Gastrocnemius medialis (tissue), 4 donors: ENCODE measurements at regions of chr11 and their contacts with region 1.

Region 1: GRCh38 chr11:72471005-72471898 is 36.9 kb upstream of the CLPB start:
- DNase-seq: peak; percentile 21 to 43
- ATAC-seq: peak; percentile 82 to 90
- H3K4me3 ChIP-seq: peak overlapping the region in 2 of 4 donors; percentile 9 to 24
- H3K27ac ChIP-seq: no peak overlapping the region
- H3K4me1 ChIP-seq: peaks cover 4 to 6% of the 10 kb centered on the region in 2 donors
- H3K27me3 ChIP-seq: no peaks in the 10 kb centered on the region
- CTCF ChIP-seq: peak; percentile 57 to 83 (median 65)
- POLR2A ChIP-seq: no peak

Region 2: DNA sequence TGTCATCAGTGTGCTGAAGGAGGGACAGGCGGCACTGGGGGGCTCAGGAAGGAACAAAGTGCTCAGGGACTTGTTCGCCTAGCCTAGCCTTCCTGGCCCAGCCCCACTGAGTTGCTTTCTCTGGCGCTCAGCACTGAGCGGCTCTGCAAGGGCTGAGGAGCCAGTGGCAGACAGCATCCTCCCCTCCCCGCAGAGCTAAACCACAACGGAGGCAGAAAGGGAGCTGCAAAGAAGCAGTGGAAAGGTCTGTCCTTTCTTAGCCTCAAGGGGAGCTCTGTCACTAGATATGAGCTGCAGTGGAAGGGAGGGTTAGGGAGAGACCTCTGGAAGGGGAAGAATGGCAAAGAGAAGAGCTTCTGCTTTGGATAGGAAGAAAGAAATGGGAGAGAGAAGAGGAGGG is 137.6 kb before region 1 on chr11:
- in situ Hi-C with region 1: no loop called
- intact Hi-C with region 1: no loop called
- DNase-seq: no peak
- ATAC-seq: no peak
- H3K4me3 ChIP-seq: no peak overlapping the region
- H3K27ac ChIP-seq: no peak overlapping the region
- H3K4me1 ChIP-seq: peaks cover 20 to 21% of the 10 kb centered on the region in 2 donors
- H3K27me3 ChIP-seq: no peaks in the 10 kb centered on the region
- CTCF ChIP-seq: no peak
- POLR2A ChIP-seq: no peak

Region 3: GRCh38 chr11:72573072-72573854 is 102.0 kb after region 1 on chr11:
- in situ Hi-C with region 1: loop called in 3 of 4 experiments (anchors 10 kb)
- intact Hi-C with region 1: loop called (anchors 2 kb)
- DNase-seq: no peak
- ATAC-seq: peak in 1 of 2 donors; percentile 66
- H3K4me3 ChIP-seq: no peak overlapping the region
- H3K27ac ChIP-seq: no peak overlapping the region
- H3K4me1 ChIP-seq: no peaks in the 10 kb centered on the region
- H3K27me3 ChIP-seq: no peaks in the 10 kb centered on the region
- CTCF ChIP-seq: peak in 3 of 5 experiments; percentile 28 to 62 (median 52)
- POLR2A ChIP-seq: no peak

Region 4: DNA sequence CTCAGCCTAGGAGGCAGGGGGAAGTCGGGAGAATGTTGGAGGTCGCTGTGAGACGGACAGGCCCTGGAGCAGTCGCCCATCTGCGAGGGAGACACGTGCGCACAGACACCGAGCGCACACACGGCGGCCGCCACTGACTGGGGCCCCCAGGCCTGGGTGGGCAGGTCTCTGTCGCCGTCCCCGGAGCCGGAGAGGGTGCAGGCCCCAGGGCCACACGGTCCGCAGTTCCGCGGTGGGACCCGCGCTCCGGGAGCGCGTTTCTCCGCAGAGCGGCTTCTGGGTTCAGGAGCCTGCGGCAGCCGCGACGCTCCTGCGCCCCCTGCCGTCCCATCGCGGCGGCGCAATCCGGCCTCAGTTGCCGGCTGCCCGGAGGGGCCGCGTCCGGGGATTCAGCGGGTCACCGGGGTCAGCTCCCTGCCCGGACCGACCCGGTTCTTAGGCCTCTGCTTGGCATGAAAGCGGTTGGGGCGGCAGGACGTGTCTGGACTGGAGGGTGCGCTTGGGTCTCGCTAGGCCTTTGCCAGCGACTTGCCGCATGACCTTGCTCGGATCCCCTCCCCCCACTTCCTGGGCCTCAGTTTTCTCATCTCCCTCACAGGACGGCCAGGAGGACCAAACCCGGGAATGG is 171.7 kb after region 1 on chr11:
- in situ Hi-C with region 1: no loop called
- intact Hi-C with region 1: loop called (anchors 5 kb)
- DNase-seq: peak in 1 of 2 donors; percentile 35
- ATAC-seq: peak; percentile 62 to 78
- H3K4me3 ChIP-seq: peak overlapping the region; percentile 63 to 77 (median 68)
- H3K27ac ChIP-seq: peak overlapping the region; percentile 24 to 67 (median 52)
- H3K4me1 ChIP-seq: peaks cover 8 to 21% of the 10 kb centered on the region in 2 donors
- H3K27me3 ChIP-seq: peaks cover 0 to 11% (median 0%) of the 10 kb centered on the region in 3 donors
- CTCF ChIP-seq: peak; percentile 94 to 99 (median 98)
- POLR2A ChIP-seq: no peak

Region 5: DNA sequence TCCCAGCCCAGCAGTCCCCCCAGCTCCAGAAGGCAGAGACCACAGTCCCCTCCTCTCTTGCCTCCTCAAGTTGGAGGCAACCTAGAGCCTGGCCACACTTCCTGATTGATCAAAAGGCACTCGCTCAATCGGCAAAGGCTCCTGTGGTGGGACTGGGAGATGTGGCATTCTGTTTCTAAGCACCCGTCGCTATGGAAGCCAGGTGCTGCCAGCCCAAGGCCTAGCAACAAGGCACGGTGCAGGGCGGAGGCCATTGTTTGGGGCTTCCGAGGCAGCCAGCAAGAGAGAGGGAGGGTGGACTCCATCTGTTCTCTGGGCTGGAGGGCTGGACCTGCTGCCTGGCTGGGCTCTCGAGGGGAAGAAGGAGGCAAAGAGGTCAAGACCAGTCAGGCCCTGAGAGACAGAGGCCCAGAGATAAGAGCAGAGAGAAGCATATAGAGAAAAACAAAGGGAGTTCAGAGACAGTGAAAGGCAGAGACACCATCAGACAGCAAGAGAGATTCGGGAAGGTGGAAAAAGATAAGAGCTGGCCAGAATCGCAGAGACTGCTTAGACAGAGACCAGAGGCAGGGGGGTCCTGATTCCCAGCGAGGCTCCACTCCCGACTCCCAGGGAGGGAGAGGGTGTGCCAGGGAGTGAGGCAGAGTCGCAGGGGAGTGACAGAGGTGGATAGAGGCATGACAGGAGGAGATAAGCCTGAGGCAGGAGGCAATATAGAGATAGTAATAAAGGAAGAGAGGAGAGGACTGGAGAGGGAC is 181.8 kb after region 1 on chr11:
- in situ Hi-C with region 1: loop called in 1 of 4 experiments (anchors 10 kb)
- intact Hi-C with region 1: no loop called
- DNase-seq: no peak
- ATAC-seq: no peak
- H3K4me3 ChIP-seq: no peak overlapping the region
- H3K27ac ChIP-seq: no peak overlapping the region
- H3K4me1 ChIP-seq: no peaks in the 10 kb centered on the region
- H3K27me3 ChIP-seq: no peaks in the 10 kb centered on the region
- CTCF ChIP-seq: no peak
- POLR2A ChIP-seq: no peak

Region 6: DNA sequence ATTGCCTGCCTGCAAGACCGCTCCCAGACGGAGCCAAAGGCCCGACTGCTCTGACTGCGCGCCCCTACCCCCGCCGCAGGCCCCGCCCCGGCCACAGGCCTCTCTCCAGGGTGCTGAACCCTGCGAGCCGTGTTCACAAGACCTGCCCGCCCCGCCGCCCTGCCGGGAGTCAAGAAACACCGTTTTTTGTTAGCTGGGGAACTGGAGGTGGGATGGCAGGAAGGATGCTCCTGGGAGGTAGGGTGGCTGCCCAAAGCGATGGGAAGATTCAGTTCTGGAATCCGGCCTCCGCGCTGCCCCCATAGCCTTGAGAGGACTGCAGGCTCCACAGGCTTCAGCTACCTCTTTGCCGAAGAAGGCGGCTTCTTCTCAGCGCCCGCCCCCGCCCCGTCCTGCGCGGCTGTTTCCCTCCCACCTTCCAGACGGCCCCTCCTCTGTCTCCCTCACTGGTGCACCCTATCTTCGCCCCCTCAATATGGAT is 205.6 kb after region 1 on chr11:
- in situ Hi-C with region 1: loop called in 1 of 4 experiments (anchors 10 kb)
- intact Hi-C with region 1: no loop called
- DNase-seq: no peak
- ATAC-seq: no peak
- H3K4me3 ChIP-seq: no peak overlapping the region
- H3K27ac ChIP-seq: no peak overlapping the region
- H3K4me1 ChIP-seq: no peaks in the 10 kb centered on the region
- H3K27me3 ChIP-seq: peaks cover 65 to 72% (median 65%) of the 10 kb centered on the region in 3 donors
- CTCF ChIP-seq: no peak
- POLR2A ChIP-seq: no peak